ENCODE measurements at regions of chr15 and their contacts with region 1.

Region 1: DNA sequence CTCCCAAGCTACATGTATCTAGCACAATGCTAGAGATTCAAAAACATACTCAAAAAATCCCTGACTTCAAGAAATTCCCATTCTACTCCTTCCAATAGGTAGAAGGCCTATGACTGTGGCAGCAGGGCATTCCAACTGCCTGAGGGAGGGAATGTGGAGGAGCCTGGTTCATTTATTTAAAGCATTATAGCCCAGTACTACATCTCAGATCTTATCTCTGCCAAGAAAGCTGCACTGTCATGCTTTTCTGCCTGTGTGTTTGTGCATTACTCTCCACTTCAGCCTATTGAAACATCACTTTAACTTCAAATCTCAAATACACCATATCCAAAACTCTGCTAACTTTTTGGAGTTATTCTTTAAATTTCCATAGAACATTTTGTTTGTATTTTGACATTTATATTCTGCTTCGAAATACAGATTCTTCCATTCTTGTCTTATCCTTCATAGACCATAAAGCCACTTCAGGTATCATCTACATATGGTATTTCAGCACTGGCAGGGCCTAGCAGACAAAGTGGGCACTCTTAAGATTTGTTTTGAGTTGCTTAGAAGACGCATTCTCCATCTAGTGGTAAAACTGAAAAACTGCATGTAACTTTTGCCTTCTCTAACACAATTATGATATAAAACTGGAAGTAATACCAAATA is 59.1 kb upstream of the NEDD4 start:
- DNase-seq: no peak
- ATAC-seq: peak; percentile 48 to 77 (median 60)
- H3K4me3 ChIP-seq: no peak overlapping the region
- H3K27ac ChIP-seq: no peak overlapping the region
- H3K4me1 ChIP-seq: no peaks in the 10 kb centered on the region
- H3K27me3 ChIP-seq: no peaks in the 10 kb centered on the region
- CTCF ChIP-seq: peak; percentile 80

Region 2: DNA sequence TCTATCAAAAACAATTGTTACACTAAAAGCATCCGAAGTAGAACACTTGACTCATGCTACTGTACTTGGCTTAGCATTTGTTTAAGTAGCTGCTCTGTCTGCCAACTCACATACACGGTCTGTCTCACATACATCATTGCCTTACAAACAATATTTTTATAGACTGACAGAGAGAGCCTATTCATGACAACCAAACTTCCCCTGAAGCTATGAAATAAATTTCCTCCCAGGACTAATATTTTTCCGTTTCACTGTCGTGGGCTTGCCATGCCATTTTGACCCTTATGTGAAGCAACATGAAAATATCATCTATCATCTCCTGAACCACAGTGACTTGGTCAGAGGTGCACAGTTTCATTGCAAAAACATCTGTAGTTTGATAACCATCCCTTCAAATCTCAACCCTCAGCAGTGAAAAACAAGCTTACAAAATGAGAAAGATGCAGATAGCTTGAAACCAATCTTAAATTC is 397.9 kb before region 1 on chr15:
- intact Hi-C with region 1: loop called (anchors 5 to 10 kb)
- DNase-seq: no peak
- ATAC-seq: no peak
- H3K4me3 ChIP-seq: no peak overlapping the region
- H3K27ac ChIP-seq: no peak overlapping the region
- H3K4me1 ChIP-seq: no peaks in the 10 kb centered on the region
- H3K27me3 ChIP-seq: no peaks in the 10 kb centered on the region
- CTCF ChIP-seq: no peak

Region 3: GRCh38 chr15:55993111-55993803 is 59.3 kb before region 1 on chr15 and contains the start of gene NEDD4:
- intact Hi-C with region 1: loop called in 1 of 2 experiments (anchors 5 kb)
- DNase-seq: peak; percentile 89 to 92
- ATAC-seq: peak; percentile 93 to 95 (median 94)
- H3K4me3 ChIP-seq: peak within 1 kb of the TSS; percentile 82
- H3K27ac ChIP-seq: peak within 1 kb of the TSS; percentile 83
- H3K4me1 ChIP-seq: peaks cover 16% of the 10 kb centered on the region
- H3K27me3 ChIP-seq: no peaks in the 10 kb centered on the region
- CTCF ChIP-seq: peak; percentile 59
- total RNA-seq, gene NEDD4: 39.1 to 145 (median 82.1) TPM